Prostate gland (tissue), 2 donors: ENCODE measurements at regions of chr5 and their contacts with region 1.

Region 1: DNA sequence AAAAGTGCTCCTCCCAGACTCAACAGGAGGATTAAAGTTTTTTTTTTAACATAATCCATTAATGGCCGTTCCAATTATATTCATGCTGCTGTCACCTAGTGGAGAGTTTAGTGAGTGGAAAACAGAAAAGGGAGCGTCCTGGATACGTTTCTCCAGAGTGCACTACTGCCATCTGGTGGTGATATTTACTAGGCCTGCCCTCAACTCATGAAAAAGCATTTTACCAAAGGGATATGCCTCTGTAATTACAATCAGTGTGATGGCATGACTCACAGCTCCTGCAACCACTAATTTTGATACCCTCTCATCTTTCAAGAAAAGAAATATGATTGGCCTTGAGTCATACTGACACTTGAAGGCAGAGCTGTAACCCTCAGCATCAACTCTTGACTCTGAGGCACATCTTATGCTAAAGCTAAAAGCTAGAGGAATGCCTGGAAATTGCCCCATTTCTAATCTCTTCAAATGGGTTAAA is 20.0 kb downstream of the MINAR2 start:
- DNase-seq: peak; percentile 75
- H3K4me3 ChIP-seq: no peak overlapping the region
- H3K27ac ChIP-seq: no peak overlapping the region
- H3K4me1 ChIP-seq: no peaks in the 10 kb centered on the region
- H3K27me3 ChIP-seq: no peaks in the 10 kb centered on the region
- CTCF ChIP-seq: peak; percentile 88 to 97 (median 94)
- POLR2A ChIP-seq: no peak

Region 2: DNA sequence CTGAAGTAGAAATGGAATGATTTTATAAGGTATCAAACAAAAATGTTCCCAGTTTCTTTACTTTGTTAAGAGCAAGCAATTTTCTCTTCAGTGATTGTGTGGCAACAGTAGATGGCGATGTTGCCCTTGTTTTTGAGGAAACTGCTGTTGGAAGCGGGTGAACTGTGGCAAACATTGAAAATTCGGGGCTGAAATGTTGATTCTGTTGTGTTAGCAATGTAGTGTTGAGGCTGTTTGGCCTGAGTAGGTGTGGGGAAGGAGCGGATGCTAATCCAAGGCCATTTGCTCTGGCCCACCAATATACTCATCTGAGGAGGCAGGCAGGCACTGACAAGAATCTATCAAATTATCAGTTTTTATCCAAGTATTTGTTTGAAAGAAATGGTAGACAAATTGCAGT is 1554.6 kb before region 1 on chr5:
- intact Hi-C with region 1: loop called (anchors 10 kb)
- DNase-seq: peak; percentile 58
- H3K4me3 ChIP-seq: no peak overlapping the region
- H3K27ac ChIP-seq: no peak overlapping the region
- H3K4me1 ChIP-seq: no peaks in the 10 kb centered on the region
- H3K27me3 ChIP-seq: no peaks in the 10 kb centered on the region
- CTCF ChIP-seq: peak in 3 of 4 experiments; percentile 66 to 83 (median 72)
- POLR2A ChIP-seq: no peak

Region 3: GRCh38 chr5:128905571-128906110 is 862.3 kb before region 1 on chr5:
- intact Hi-C with region 1: loop called (anchors 5 kb)
- DNase-seq: peak; percentile 39
- H3K4me3 ChIP-seq: no peak overlapping the region
- H3K27ac ChIP-seq: no peak overlapping the region
- H3K4me1 ChIP-seq: no peaks in the 10 kb centered on the region
- H3K27me3 ChIP-seq: peaks cover 3% of the 10 kb centered on the region
- CTCF ChIP-seq: peak; percentile 50 to 84 (median 75)
- POLR2A ChIP-seq: no peak

Region 4: GRCh38 chr5:129113871-129114270 is 654.1 kb before region 1 on chr5:
- intact Hi-C with region 1: loop called (anchors 5 kb)
- DNase-seq: no peak
- H3K4me3 ChIP-seq: no peak overlapping the region
- H3K27ac ChIP-seq: no peak overlapping the region
- H3K4me1 ChIP-seq: no peaks in the 10 kb centered on the region
- H3K27me3 ChIP-seq: no peaks in the 10 kb centered on the region
- CTCF ChIP-seq: peak in 3 of 4 experiments; percentile 25 to 42 (median 38)
- POLR2A ChIP-seq: no peak

Region 5: DNA sequence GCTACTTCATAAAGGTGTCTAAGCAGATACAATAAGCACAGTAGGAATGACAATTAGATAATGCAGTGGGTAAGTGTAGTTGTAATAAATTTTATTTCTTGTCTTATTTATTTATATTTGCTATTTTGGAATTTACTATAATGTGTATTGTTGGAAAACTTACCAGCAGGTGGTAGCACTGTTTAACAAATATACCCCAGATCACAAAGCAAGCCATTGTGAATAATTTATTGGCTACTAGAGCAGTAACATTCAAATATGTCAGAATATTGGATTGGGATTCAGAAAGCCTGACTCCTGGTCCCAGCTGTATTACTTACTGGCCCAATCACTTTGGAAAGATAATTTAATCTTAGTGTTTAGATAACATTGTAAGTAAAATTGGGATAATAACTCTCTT is 595.4 kb before region 1 on chr5:
- intact Hi-C with region 1: loop called (anchors 5 kb)
- DNase-seq: no peak
- H3K4me3 ChIP-seq: no peak overlapping the region
- H3K27ac ChIP-seq: no peak overlapping the region
- H3K4me1 ChIP-seq: no peaks in the 10 kb centered on the region
- H3K27me3 ChIP-seq: no peaks in the 10 kb centered on the region
- CTCF ChIP-seq: peak in 3 of 4 experiments; percentile 20 to 45 (median 36)
- POLR2A ChIP-seq: no peak

Region 6: DNA sequence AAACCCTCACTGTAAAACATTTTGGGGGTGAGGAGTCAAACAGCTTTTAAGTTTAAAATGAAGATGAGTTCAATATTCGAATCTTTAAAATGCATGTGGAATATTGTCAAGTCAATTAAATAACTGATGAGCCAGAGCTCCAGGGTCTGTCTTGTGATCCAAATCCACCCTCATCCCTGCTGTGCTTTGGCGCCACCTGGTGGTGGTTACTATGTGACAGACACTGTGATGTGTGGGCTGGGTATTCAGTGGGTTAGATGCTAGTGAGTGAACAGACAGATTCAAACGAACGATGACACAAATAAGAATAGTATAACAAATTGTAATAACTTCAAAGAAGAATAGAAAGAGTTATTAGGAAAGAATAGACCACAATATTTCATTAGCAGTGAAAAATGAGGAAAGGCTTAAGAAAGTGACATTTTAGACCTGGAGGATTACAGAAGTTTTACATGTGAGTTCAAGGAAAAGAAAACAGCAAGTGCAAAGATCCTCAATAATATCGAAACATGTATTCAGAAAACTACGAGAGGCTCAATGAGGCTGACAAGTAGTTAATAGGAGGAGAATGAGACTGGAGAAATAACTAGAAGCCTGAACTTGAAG is 84.9 kb after region 1 on chr5:
- intact Hi-C with region 1: loop called (anchors 2 kb)
- DNase-seq: peak; percentile 40
- H3K4me3 ChIP-seq: no peak overlapping the region
- H3K27ac ChIP-seq: no peak overlapping the region
- H3K4me1 ChIP-seq: no peaks in the 10 kb centered on the region
- H3K27me3 ChIP-seq: no peaks in the 10 kb centered on the region
- CTCF ChIP-seq: peak; percentile 46 to 68 (median 61)
- POLR2A ChIP-seq: no peak